Panc1 (cell line): ENCODE measurements at regions of chr2 and their contacts with region 1.

Region 1: DNA sequence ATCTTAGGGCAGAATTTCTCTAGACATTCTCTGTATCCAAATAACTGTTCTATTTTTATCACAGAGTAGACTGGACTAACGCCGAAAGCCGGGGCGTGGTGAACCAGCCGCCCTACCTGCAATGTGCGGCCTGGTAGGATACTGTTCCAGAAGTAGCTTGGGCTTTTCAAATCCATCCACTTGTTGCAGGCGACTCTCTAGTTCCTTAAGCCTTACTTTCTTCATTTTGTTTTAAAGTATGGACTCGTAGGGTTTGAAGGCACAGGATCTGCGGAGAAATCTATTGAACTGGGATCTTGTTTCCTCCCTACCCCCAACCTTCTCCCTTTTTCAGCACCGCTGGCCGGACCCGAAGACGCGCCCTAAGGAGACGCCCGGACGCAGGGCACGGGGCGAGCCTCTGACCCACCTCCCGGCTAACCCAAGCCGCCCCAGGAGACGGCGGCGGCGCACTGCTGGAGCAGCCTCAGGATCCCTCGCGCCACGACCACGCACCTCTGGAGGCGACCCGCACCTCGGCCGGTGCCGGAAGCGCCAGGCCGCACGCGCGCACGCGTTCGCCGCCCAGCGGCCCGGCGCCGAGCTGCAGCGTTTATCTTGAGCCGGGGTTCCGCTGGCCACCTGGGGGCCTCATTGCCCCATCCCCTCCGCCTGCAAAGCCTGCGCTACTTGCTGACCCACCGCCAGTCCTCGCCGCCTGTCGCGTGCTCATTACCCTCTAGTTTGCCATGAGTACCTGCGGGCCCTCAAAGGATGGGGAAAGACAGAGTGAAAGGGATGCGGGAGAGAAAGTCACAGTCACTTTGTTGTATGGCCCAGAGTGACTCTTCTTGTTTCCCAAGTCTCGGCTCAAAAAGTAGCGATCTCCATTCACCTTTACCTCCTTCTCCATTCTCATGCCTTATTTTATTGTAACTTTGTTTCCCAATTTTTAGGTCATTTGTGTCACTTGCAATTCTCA is at the start of gene METTL5:
- DNase-seq: peak; percentile 50
- ATAC-seq: peak; percentile 84
- H3K4me3 ChIP-seq: peak within 1 kb of the TSS; percentile 75 to 93
- H3K27ac ChIP-seq: peak within 1 kb of the TSS; percentile 93
- H3K4me1 ChIP-seq: peaks cover 15% of the 10 kb centered on the region
- H3K27me3 ChIP-seq: no peaks in the 10 kb centered on the region
- CTCF ChIP-seq: peak; percentile 100
- total RNA-seq, gene METTL5: 81.4 TPM

Region 2: GRCh38 chr2:169775765-169776164 is 48.9 kb before region 1 on chr2:
- CTCF ChIA-PET with region 1: no interaction called
- POLR2A ChIA-PET with region 1: interaction called, 10 read pairs
- in situ Hi-C with region 1: no loop called
- intact Hi-C with region 1: no loop called
- DNase-seq: no peak
- ATAC-seq: no peak
- H3K4me3 ChIP-seq: no peak overlapping the region
- H3K27ac ChIP-seq: no peak overlapping the region
- H3K4me1 ChIP-seq: no peaks in the 10 kb centered on the region
- H3K27me3 ChIP-seq: no peaks in the 10 kb centered on the region
- CTCF ChIP-seq: no peak

Region 3: DNA sequence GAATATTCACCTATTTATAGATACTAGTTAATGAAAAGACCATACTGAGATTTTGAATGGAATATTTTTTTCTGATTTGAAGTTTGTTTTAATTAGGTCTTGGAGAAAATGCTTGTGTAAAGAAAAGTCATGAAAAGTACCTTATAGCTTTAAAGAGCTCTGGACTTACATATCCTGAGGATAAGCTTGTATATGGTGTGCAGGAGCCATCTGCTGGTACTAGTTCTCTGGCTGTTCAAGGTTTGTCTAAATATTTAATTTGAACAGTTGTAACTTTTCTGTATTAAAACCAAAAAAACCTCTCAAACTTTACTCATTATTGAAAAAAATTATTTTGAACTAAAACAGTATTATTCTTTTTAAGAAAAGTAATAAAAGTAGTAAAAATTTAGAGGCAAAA is 52.7 kb after region 1 on chr2:
- CTCF ChIA-PET with region 1: interaction called, 13 read pairs
- POLR2A ChIA-PET with region 1: interaction called, 7 read pairs
- in situ Hi-C with region 1: no loop called
- intact Hi-C with region 1: loop called (anchors 5 kb)
- DNase-seq: no peak
- ATAC-seq: no peak
- H3K4me3 ChIP-seq: no peak overlapping the region
- H3K27ac ChIP-seq: no peak overlapping the region
- H3K4me1 ChIP-seq: no peaks in the 10 kb centered on the region
- H3K27me3 ChIP-seq: no peaks in the 10 kb centered on the region
- CTCF ChIP-seq: no peak; the same call in 1 of the 2 replicates

Region 4: DNA sequence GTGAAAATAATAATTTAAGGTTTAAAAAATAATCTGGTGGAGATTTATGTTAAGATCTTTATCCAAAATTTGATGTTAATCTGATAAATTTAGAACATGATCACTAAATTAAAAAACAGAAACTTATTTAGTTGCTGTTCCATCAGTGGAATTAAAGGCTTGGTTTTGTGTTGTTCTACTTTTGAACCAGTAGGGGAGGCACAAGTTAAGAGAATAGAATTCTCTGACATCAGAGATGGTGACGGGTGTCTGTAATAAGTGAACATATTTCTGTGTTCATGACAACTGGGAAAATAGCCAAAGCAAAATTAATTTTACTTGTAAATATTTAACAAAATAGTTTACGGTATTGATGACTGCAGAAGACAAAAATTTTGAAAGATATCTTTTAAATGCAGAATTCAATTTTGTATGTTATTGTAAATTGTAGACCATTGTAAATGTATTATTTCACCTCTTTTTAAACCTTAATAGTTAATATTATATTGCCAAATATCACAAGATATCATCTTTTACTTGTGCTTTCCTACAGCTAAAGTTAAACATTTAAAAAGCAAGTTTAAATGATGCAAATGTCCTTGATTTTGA is 108.6 kb after region 1 on chr2:
- CTCF ChIA-PET with region 1: interaction called, 4 read pairs
- POLR2A ChIA-PET with region 1: no interaction called
- in situ Hi-C with region 1: no loop called
- intact Hi-C with region 1: loop called (anchors 5 kb)
- DNase-seq: peak; percentile 4
- ATAC-seq: no peak; the same call in 1 of the 2 replicates
- H3K4me3 ChIP-seq: no peak overlapping the region
- H3K27ac ChIP-seq: no peak overlapping the region
- H3K4me1 ChIP-seq: no peaks in the 10 kb centered on the region
- H3K27me3 ChIP-seq: no peaks in the 10 kb centered on the region
- CTCF ChIP-seq: peak; percentile 78; the same call in 1 of the 2 replicates

Region 5: GRCh38 chr2:170139276-170139967 is 314.8 kb after region 1 on chr2:
- CTCF ChIA-PET with region 1: no interaction called
- POLR2A ChIA-PET with region 1: no interaction called
- in situ Hi-C with region 1: no loop called
- intact Hi-C with region 1: no loop called
- DNase-seq: no peak
- ATAC-seq: no peak; the same call in 1 of the 2 replicates
- H3K4me3 ChIP-seq: no peak overlapping the region
- H3K27ac ChIP-seq: no peak overlapping the region
- H3K4me1 ChIP-seq: no peaks in the 10 kb centered on the region
- H3K27me3 ChIP-seq: no peaks in the 10 kb centered on the region
- CTCF ChIP-seq: no peak

Region 6: DNA sequence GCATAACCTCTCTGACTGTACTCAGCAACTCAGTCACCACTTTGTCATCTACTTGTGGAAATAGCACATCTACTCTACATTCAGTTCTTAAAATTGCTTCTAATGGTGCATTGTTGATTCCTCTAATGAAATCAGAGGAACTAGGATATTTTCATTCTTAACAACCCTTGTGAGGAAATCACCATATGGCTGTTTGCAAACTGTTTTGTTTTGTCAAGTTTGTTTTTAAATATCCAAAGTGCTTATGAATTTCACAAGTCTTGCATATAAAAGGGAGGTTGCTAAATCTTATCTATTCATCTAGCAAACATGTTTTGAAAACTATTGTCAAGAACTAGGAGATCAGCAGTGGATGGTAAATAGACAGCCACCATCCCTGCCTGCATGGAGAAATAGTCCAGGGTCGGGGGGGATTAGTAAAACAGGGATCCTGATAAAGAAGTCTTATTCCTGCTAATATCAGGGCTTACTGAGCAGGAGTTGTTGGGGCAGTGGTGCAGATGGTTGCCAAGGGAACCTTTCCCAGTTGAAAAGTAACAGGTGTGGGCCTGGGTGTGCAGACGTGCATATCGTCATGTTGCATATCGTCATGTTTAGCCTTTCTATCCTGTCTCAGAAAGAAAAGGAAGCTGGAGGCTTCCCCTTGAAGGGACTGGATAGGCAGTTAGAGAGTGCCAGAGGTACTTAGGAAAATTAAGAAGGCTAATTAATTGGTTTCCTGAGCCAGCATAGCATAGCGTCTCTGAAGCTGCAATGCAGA is 345.8 kb after region 1 on chr2:
- CTCF ChIA-PET with region 1: no interaction called
- POLR2A ChIA-PET with region 1: no interaction called
- in situ Hi-C with region 1: no loop called
- intact Hi-C with region 1: no loop called
- DNase-seq: no peak
- ATAC-seq: no peak
- H3K4me3 ChIP-seq: no peak overlapping the region
- H3K27ac ChIP-seq: no peak overlapping the region
- H3K4me1 ChIP-seq: no peaks in the 10 kb centered on the region
- H3K27me3 ChIP-seq: no peaks in the 10 kb centered on the region
- CTCF ChIP-seq: no peak